ENCODE measurements at regions of chr11 and their contacts with region 1.

Region 1: GRCh38 chr11:61129639-61130523 is 27.6 kb downstream of the CD5 start:
- DNase-seq: peak; percentile 90 to 94
- H3K4me3 ChIP-seq: no peak overlapping the region
- H3K4me3 Mint-ChIP-seq: no peak overlapping the region
- H3K27ac Mint-ChIP-seq: peak overlapping the region; percentile 60
- H3K4me1 ChIP-seq: peaks cover 6% of the 10 kb centered on the region; the same call in 1 of the 2 replicates
- H3K4me1 Mint-ChIP-seq: peaks cover 9% of the 10 kb centered on the region
- H3K27me3 ChIP-seq: no peaks in the 10 kb centered on the region
- H3K27me3 Mint-ChIP-seq: no peaks in the 10 kb centered on the region
- CTCF ChIP-seq: peak; percentile 99 to 100

Region 2: DNA sequence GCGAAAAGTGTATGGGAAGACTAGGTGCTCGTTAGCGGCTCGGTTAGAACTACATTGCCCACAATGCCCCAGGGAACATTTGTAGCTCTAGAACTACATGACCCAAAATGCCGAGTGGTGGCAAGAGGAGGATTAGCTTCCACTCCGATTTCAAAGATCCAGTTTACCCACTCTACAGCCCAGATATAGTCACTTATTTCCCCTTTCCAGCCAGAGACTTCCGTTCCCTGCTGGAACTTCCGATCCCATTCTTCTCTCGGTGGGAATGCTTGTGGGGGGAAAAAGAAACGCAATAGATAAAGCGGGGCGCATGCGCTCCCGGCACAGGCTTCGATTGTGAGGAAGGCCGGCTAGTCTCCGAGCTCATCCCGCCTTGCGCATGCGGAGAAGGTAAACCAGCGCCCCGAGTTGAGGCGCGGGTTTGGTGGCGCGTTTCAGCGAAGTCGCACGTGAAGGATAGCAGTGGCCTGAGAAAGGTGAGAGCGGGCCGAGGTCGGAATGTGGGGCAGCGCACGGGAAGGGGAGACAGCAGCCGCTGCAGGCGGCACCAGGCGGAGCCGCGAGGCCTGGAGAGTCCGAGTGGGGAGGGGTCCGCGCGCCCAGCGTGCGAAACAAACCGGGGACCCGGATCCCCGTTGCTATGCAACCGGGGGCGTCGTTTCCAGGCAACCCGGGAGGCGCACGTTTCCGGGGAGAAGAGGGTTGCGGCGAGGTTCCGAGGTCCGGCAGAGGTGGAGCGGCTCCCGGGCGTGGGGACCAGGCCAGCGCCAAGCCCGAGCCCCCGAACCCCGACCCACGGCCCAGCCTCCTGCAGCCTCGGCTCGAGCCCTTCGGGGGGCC is 215.9 kb before region 1 on chr11 and contains the start of gene TMEM109:
- CTCF ChIA-PET with region 1: interaction called, 5 read pairs
- POLR2A ChIA-PET with region 1: no interaction called
- intact Hi-C with region 1: loop called (anchors 5 kb)
- DNase-seq: peak; percentile 89 to 92
- H3K4me3 ChIP-seq: peak within 1 kb of the TSS; percentile 77
- H3K4me3 Mint-ChIP-seq: peak within 1 kb of the TSS; percentile 92
- H3K27ac Mint-ChIP-seq: peak within 1 kb of the TSS; percentile 91
- H3K4me1 ChIP-seq: peaks cover 26% of the 10 kb centered on the region
- H3K4me1 Mint-ChIP-seq: peaks cover 7% of the 10 kb centered on the region
- H3K27me3 ChIP-seq: no peaks in the 10 kb centered on the region
- H3K27me3 Mint-ChIP-seq: peaks cover 3% of the 10 kb centered on the region
- CTCF ChIP-seq: no peak
- total RNA-seq, gene TMEM109: 82.3 and 91.9 TPM in 2 replicates

Region 3: DNA sequence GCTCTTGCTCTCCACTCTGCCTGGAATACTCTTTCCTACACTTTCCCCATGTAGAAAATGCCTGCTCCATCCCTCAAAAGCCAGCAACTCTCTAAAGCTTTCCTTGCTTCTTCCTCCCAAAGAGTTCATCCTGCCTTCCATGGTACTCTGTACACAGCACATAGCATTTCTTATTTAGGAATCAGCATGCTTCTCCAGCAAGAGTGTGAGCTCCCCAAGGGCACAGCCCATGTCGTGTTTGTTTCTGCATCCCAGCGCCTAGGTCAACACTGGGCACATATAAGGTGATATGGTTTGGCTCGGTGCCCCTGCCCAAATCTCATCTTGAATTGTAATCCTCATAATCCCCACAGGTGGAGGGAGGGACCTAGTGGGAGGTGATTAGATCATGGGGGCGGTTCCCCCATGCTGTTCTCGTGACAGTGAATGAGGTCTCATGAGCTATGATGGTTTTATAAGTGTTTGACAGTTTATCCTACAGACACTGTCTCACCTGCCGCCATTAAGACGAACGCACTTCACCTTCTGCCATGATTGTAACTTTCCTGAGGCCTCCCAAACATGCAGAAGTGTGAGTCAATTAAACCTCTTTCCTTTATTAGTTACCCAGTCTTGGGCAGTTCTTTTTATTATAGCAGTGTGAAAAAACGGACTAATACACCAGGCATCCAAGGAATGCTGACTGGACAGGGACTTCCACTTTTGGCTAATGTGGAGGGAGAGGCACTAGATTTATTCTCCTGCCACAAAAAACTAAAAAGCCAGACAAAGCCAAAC is 23.1 kb after region 1 on chr11:
- CTCF ChIA-PET with region 1: interaction called, 5 read pairs
- POLR2A ChIA-PET with region 1: no interaction called
- intact Hi-C with region 1: loop called (anchors 1 kb)
- DNase-seq: peak in 1 of 2 experiments; percentile 57
- H3K4me3 ChIP-seq: no peak overlapping the region
- H3K4me3 Mint-ChIP-seq: peak overlapping the region; percentile 48
- H3K27ac Mint-ChIP-seq: peak overlapping the region; percentile 84
- H3K4me1 ChIP-seq: peaks cover 83% of the 10 kb centered on the region
- H3K4me1 Mint-ChIP-seq: peaks cover 78% of the 10 kb centered on the region
- H3K27me3 ChIP-seq: no peaks in the 10 kb centered on the region
- H3K27me3 Mint-ChIP-seq: no peaks in the 10 kb centered on the region
- CTCF ChIP-seq: no peak

Region 4: DNA sequence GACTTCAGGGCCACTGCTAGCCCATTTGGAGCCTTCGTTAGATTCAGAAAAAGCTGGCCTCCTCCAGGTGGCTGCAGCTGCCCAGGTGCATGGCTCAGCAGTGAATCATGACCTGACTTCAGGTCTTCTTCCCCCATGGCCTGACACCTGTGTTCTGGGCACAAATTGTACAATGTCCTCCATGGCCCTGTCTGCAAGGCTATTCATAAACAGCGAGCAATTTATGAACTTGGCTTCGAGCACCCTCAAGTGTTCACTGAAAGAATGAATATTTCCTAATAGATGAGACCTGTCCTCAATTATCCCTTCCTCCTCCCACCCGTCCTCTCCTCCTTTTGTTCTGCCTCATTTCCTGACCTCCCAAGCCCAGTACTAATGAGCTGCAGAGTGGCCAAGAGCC is 43.6 kb after region 1 on chr11:
- CTCF ChIA-PET with region 1: interaction called, 4 read pairs
- POLR2A ChIA-PET with region 1: no interaction called
- intact Hi-C with region 1: loop called (anchors 1 kb)
- DNase-seq: peak; percentile 43 to 46
- H3K4me3 ChIP-seq: no peak overlapping the region
- H3K4me3 Mint-ChIP-seq: no peak overlapping the region
- H3K27ac Mint-ChIP-seq: no peak overlapping the region
- H3K4me1 ChIP-seq: peaks cover 8% of the 10 kb centered on the region; the same call in 1 of the 2 replicates
- H3K4me1 Mint-ChIP-seq: peaks cover 7% of the 10 kb centered on the region
- H3K27me3 ChIP-seq: no peaks in the 10 kb centered on the region
- H3K27me3 Mint-ChIP-seq: no peaks in the 10 kb centered on the region
- CTCF ChIP-seq: peak; percentile 25 to 40

Measured in Caco-2 (cell line).